GM13976 (cell line): ENCODE measurements at regions of chr6 and their contacts with region 1.

Region 1: GRCh38 chr6:2353412-2354137 is 108.2 kb upstream of the GMDS start:
- DNase-seq: peak; percentile 73
- CTCF ChIP-seq: peak; percentile 73

Region 2: DNA sequence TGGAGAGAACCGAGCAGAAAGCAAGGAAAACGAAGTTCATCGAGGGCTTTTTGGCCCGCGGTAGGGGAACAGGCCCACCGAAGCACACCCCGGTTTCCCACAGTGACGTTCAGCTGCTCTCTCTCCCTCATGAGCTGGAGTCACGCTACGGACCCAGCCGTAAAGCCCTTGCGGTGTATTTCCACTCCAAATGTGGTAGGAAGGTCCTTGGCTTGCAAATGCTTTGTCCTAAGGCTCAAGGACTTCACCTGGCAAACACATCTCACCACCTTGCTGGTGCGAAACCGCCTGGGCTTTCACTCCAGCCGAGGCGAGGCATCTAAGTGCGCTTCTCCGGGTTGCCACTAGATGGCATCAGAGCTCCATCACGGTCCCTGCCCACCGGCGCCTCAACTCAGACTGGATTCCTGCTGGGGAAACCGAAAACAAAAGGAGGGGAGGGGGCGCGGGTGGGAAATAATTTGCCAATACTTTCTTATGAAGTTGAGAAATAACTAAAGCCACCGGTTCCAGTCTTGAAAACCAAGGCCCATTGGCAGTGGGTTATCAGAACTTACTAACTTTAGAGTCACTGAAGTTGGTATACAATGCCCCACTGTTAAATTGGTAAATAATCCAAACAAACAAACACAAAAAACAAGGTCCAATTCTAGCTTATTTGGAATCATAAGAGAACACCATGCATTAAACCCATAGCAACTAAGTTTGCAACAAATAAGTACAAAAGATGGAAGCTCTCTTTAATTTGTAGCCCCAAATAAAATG is 757.3 kb before region 1 on chr6:
- in situ Hi-C with region 1: loop called (anchors 10 kb)
- DNase-seq: peak; percentile 86
- CTCF ChIP-seq: peak; percentile 79

Region 3: GRCh38 chr6:2209226-2209809 is 144.3 kb before region 1 on chr6:
- in situ Hi-C with region 1: loop called (anchors 10 kb)
- DNase-seq: peak; percentile 40
- CTCF ChIP-seq: peak; percentile 79

Region 4: DNA sequence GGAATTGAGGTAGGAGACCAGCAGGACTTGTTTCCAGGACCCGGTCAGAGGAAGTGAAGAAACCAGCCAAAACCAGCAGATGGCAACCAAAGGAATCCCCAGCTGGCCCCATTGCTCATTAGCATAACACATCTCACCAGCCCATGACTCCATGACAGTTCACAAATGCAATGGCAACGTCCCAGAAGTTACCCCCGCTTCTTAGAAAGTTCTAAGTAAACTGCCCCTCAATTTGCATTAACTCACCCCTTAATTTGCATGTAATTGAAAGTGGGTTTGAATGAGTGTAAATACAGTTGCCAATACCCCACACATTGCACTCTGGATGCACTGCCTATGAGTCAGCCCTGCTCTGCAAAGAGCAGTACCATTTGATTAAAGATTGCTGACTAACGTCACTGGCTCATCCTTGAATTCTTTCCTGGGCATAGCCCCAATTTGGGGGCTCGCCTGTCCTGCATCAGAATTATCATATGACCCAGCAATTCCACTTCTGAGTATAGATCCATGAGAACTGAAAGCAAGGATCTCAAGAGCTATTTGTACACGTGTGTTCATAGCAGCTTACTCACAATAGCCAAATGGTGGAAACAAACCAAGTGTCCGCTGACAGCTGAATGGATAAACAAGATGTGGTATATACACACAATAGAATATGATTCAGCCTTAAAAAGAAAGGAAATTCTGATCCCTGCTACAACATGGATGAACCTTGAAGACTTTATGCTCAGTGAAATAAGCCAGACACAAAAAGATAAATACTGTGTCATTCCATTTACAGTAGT is 360.7 kb after region 1 on chr6:
- in situ Hi-C with region 1: no loop called
- DNase-seq: no peak
- CTCF ChIP-seq: no peak